ENCODE measurements at regions of chr14 and their contacts with region 1.

Region 1: GRCh38 chr14:103141119-103141796 is 18.0 kb downstream of the TNFAIP2 start:
- DNase-seq: no peak
- ATAC-seq: peak; percentile 50
- H3K4me3 ChIP-seq: peak overlapping the region; percentile 7; the same call in 1 of the 2 replicates
- H3K27ac ChIP-seq: peak overlapping the region; percentile 12; the same call in 1 of the 2 replicates
- H3K4me1 ChIP-seq: peaks cover 16% of the 10 kb centered on the region
- H3K27me3 ChIP-seq: no peaks in the 10 kb centered on the region
- CTCF ChIP-seq: peak; percentile 82 to 95 (median 92)
- EP300 ChIP-seq: no peak
- POLR2A ChIP-seq: no peak
- RAD21 ChIP-seq: peak; percentile 74

Region 2: DNA sequence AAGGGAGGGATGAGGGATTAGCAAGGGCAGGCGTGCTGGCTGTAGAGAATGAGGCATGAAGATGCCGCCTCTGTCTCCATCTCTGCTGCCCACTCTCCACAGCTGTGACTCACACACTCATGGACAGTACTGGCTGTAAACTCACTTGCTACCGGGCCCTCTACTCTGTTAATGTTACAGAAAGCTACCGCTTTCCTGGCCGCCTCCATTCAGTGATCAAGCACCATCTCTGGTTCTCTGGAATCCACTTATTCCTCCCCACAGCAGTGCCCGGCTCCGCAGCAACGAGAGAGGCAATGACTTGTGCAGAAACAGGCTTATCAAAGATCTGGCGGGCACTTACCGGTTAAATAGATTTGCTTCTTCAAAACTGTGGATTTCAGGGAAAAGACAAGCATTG is 184.0 kb before region 1 on chr14:
- CTCF ChIA-PET with region 1: no interaction called
- POLR2A ChIA-PET with region 1: no interaction called
- RAD21 ChIA-PET with region 1: no interaction called
- SMC1A ChIA-PET with region 1: no interaction called
- in situ Hi-C with region 1: no loop called
- intact Hi-C with region 1: no loop called
- DNase-seq: no peak
- ATAC-seq: no peak
- H3K4me3 ChIP-seq: no peak overlapping the region
- H3K27ac ChIP-seq: no peak overlapping the region
- H3K4me1 ChIP-seq: no peaks in the 10 kb centered on the region
- H3K27me3 ChIP-seq: no peaks in the 10 kb centered on the region
- CTCF ChIP-seq: no peak
- EP300 ChIP-seq: no peak
- POLR2A ChIP-seq: no peak
- RAD21 ChIP-seq: no peak

Region 3: GRCh38 chr14:103067233-103067954 is 73.9 kb before region 1 on chr14:
- CTCF ChIA-PET with region 1: no interaction called
- POLR2A ChIA-PET with region 1: no interaction called
- RAD21 ChIA-PET with region 1: no interaction called
- SMC1A ChIA-PET with region 1: no interaction called
- in situ Hi-C with region 1: no loop called
- intact Hi-C with region 1: no loop called
- DNase-seq: no peak
- ATAC-seq: no peak
- H3K4me3 ChIP-seq: no peak overlapping the region
- H3K27ac ChIP-seq: no peak overlapping the region
- H3K4me1 ChIP-seq: no peaks in the 10 kb centered on the region
- H3K27me3 ChIP-seq: no peaks in the 10 kb centered on the region; a peak in 1 of 4 replicates
- CTCF ChIP-seq: no peak
- EP300 ChIP-seq: no peak
- POLR2A ChIP-seq: no peak
- RAD21 ChIP-seq: no peak

Region 4: DNA sequence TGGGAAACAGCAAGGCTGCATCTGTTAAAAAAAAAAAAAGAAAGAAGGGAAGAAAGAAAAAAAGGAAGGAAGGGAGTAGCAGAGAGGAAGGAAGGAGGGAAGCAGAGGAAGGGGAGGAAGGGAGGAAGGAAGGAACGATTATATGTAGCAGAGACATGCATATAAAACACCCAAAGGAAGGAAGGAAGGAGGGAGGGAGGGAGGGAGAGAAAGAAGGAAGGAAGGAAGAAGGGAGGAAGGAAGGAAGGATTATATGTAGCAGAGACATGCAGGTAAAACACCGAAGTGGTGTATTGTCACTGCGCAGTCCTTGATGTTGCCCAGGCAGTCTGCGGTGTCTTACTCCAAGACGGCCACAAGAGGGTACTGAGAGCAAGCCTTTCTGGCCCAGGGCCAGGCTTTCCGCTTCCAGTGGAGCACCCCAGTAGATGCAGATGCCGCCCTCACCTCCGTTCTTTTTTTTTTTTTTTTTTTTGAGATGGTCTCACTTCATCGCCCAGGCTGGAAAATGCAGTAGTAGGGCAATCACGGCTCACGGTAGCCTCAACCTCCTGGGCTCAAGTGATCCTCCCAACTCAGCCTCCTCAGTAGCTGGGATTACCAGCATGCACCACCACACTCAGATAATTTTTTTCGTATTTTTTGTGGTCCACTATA is 63.0 kb before region 1 on chr14:
- CTCF ChIA-PET with region 1: interaction called, 7 read pairs
- POLR2A ChIA-PET with region 1: no interaction called
- RAD21 ChIA-PET with region 1: interaction called, 6 read pairs
- SMC1A ChIA-PET with region 1: interaction called, 4 read pairs
- in situ Hi-C with region 1: no loop called
- intact Hi-C with region 1: loop called (anchors 1 kb)
- DNase-seq: peak; percentile 48
- ATAC-seq: peak; percentile 74
- H3K4me3 ChIP-seq: no peak overlapping the region
- H3K27ac ChIP-seq: no peak overlapping the region
- H3K4me1 ChIP-seq: peaks cover 8% of the 10 kb centered on the region
- H3K27me3 ChIP-seq: no peaks in the 10 kb centered on the region; a peak in 1 of 4 replicates
- CTCF ChIP-seq: peak; percentile 75 to 93 (median 86)
- EP300 ChIP-seq: no peak
- POLR2A ChIP-seq: no peak
- RAD21 ChIP-seq: peak; percentile 83

Region 5: DNA sequence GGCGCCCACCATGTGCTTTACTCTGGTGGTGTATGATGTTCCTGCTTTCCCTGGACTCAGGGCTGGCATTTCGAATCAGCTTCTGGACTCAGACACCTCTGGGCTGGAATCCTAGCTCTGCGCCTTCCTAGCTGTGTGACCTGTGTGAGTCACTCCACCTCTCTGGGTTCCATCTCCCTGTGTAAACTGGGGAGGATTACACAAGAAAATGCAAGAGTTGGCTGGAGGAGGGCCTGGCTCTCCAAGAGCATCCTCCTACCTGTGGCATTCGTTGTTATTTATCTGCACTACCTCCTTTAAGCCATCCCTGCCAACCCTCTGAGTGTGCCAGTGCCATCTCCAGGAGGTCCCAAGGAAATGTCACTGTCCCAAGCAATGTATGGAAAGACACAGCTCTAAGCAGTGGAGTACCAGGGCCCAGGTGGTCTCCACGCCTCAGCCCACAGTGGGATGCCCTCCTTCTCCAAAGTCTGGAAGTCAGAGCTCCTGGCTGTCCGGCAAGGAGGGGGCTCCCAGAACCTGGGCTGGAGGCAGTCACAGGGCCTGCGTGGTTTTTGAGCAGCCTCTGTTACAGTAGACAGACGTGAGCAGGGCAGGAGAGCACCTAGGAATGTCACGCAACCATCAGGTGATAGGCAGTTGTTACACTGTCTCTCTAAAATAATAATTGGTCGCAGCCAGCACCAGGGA is 25.2 kb before region 1 on chr14:
- CTCF ChIA-PET with region 1: interaction called, 32 read pairs
- POLR2A ChIA-PET with region 1: interaction called, 3 read pairs
- RAD21 ChIA-PET with region 1: interaction called, 40 read pairs
- SMC1A ChIA-PET with region 1: interaction called, 22 read pairs
- in situ Hi-C with region 1: no loop called
- intact Hi-C with region 1: no loop called
- DNase-seq: no peak
- ATAC-seq: no peak
- H3K4me3 ChIP-seq: no peak overlapping the region
- H3K27ac ChIP-seq: no peak overlapping the region
- H3K4me1 ChIP-seq: peaks cover 50% of the 10 kb centered on the region
- H3K27me3 ChIP-seq: no peaks in the 10 kb centered on the region
- CTCF ChIP-seq: no peak
- EP300 ChIP-seq: no peak
- POLR2A ChIP-seq: no peak
- RAD21 ChIP-seq: no peak

Region 6: GRCh38 chr14:103121846-103122584 is 19.2 kb before region 1 on chr14:
- CTCF ChIA-PET with region 1: interaction called, 12 read pairs
- POLR2A ChIA-PET with region 1: interaction called, 3 read pairs
- RAD21 ChIA-PET with region 1: interaction called, 7 read pairs
- SMC1A ChIA-PET with region 1: interaction called, 5 read pairs
- in situ Hi-C with region 1: no loop called
- intact Hi-C with region 1: no loop called
- DNase-seq: no peak
- ATAC-seq: peak; percentile 56
- H3K4me3 ChIP-seq: peak overlapping the region; percentile 79; the same call in 1 of the 2 replicates
- H3K27ac ChIP-seq: peak overlapping the region; percentile 61
- H3K4me1 ChIP-seq: peaks cover 21% of the 10 kb centered on the region
- H3K27me3 ChIP-seq: no peaks in the 10 kb centered on the region
- CTCF ChIP-seq: no peak
- EP300 ChIP-seq: 0 out of 4 replicates have a peak, but pooled peaks of 1 of the 2 experiments have one; percentile 10
- POLR2A ChIP-seq: no peak
- RAD21 ChIP-seq: no peak

Region 7: GRCh38 chr14:103151258-103151945 is 10.1 kb after region 1 on chr14:
- CTCF ChIA-PET with region 1: interaction called, 12 read pairs
- POLR2A ChIA-PET with region 1: no interaction called
- RAD21 ChIA-PET with region 1: interaction called, 3 read pairs
- SMC1A ChIA-PET with region 1: no interaction called
- in situ Hi-C with region 1: no loop called
- intact Hi-C with region 1: no loop called
- DNase-seq: no peak
- ATAC-seq: no peak
- H3K4me3 ChIP-seq: no peak overlapping the region
- H3K27ac ChIP-seq: no peak overlapping the region
- H3K4me1 ChIP-seq: no peaks in the 10 kb centered on the region; the same call in 1 of the 2 replicates
- H3K27me3 ChIP-seq: no peaks in the 10 kb centered on the region; a peak in 1 of 4 replicates
- CTCF ChIP-seq: no peak
- EP300 ChIP-seq: no peak
- POLR2A ChIP-seq: no peak
- RAD21 ChIP-seq: no peak

Region 8: GRCh38 chr14:103185051-103185992 is 44.1 kb after region 1 on chr14:
- CTCF ChIA-PET with region 1: interaction called, 25 read pairs
- POLR2A ChIA-PET with region 1: interaction called, 4 read pairs
- RAD21 ChIA-PET with region 1: interaction called, 8 read pairs
- SMC1A ChIA-PET with region 1: interaction called, 5 read pairs
- in situ Hi-C with region 1: no loop called
- intact Hi-C with region 1: loop called (anchors 5 kb)
- DNase-seq: no peak
- ATAC-seq: peak; percentile 41
- H3K4me3 ChIP-seq: no peak overlapping the region
- H3K27ac ChIP-seq: no peak overlapping the region
- H3K4me1 ChIP-seq: no peaks in the 10 kb centered on the region
- H3K27me3 ChIP-seq: peaks cover 0 to 2% of the 10 kb centered on the region in 2 experiments; a peak in 1 of 4 replicates
- CTCF ChIP-seq: peak; percentile 48 to 67 (median 55); a peak in 5 of 6 replicates
- EP300 ChIP-seq: no peak
- POLR2A ChIP-seq: no peak
- RAD21 ChIP-seq: peak; percentile 62

Region 9: GRCh38 chr14:103292426-103293374 is 151.4 kb after region 1 on chr14:
- CTCF ChIA-PET with region 1: interaction called, 10 read pairs
- POLR2A ChIA-PET with region 1: no interaction called
- RAD21 ChIA-PET with region 1: interaction called, 5 read pairs
- SMC1A ChIA-PET with region 1: interaction called, 5 read pairs
- in situ Hi-C with region 1: no loop called
- intact Hi-C with region 1: loop called (anchors 2 kb)
- DNase-seq: peak; percentile 52
- ATAC-seq: peak; percentile 99
- H3K4me3 ChIP-seq: no peak overlapping the region
- H3K27ac ChIP-seq: no peak overlapping the region
- H3K4me1 ChIP-seq: no peaks in the 10 kb centered on the region
- H3K27me3 ChIP-seq: no peaks in the 10 kb centered on the region
- CTCF ChIP-seq: peak; percentile 94 to 98 (median 96)
- EP300 ChIP-seq: no peak
- POLR2A ChIP-seq: no peak
- RAD21 ChIP-seq: peak; percentile 95

Measured in GM12878 (cell line).